GM12878 (cell line): ENCODE measurements at regions of chr3 and their contacts with region 1.

Region 1: GRCh38 chr3:165502707-165503106 is 306.5 kb upstream of the SLITRK3 start:
- DNase-seq: no peak
- ATAC-seq: peak; percentile 70
- H3K4me3 ChIP-seq: no peak overlapping the region
- H3K27ac ChIP-seq: no peak overlapping the region
- H3K4me1 ChIP-seq: no peaks in the 10 kb centered on the region
- H3K27me3 ChIP-seq: no peaks in the 10 kb centered on the region
- CTCF ChIP-seq: no peak
- EP300 ChIP-seq: no peak
- POLR2A ChIP-seq: no peak
- RAD21 ChIP-seq: no peak

Region 2: DNA sequence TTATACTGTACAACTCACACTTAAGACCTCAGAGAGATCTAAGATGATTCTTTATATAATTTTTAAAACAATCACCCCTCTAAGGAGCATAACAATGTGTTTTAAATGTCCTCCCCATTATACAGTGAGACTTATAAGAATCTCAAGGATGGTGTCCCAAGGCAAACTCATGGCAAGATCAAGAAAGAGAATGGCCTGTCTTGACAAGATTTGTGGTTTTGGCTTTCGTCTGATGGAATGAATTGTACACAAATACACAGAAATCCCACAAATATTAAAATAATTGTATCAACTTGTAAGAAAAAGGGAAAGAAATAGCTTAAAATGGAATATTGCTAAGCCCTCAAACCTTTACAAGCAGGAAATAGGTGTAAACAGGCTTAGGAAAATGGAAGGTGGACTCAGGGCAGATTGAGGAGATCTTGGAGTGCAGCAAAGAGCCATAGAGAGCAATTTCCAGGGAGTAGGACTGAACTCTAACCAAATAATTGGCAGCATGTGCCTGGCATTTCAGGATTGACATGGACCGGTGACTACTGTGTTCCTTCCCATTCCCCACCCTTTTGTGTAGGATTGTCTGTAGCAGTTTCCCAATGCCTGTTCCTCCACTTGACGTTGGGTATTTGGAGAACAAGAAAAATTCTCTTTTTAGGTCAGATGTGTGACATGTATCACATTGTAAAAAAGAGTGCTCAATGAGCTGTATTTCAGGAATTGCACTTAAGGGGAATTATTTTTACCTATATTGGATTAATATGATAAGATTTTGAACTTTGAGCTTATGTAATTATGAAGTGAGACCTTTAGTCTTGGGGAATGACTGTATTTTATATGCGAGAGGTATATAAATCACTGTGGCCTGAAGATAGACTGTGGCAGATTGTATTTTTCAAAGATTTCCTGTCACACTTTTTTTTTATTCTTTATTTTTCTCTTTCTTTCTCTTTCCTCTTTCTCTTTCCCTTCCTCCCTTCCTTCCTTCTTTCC is 11.3 kb after region 1 on chr3:
- CTCF ChIA-PET with region 1: interaction called, 6 read pairs
- POLR2A ChIA-PET with region 1: interaction called, 6 read pairs
- RAD21 ChIA-PET with region 1: interaction called, 4 read pairs
- SMC1A ChIA-PET with region 1: interaction called, 11 read pairs
- in situ Hi-C with region 1: no loop called
- intact Hi-C with region 1: no loop called
- DNase-seq: no peak
- ATAC-seq: no peak
- H3K4me3 ChIP-seq: no peak overlapping the region
- H3K27ac ChIP-seq: no peak overlapping the region
- H3K4me1 ChIP-seq: no peaks in the 10 kb centered on the region
- H3K27me3 ChIP-seq: no peaks in the 10 kb centered on the region
- CTCF ChIP-seq: no peak
- EP300 ChIP-seq: no peak
- POLR2A ChIP-seq: no peak
- RAD21 ChIP-seq: no peak